PC-9 (cell line): ENCODE measurements at regions of chrX and their contacts with region 1.

Region 1: DNA sequence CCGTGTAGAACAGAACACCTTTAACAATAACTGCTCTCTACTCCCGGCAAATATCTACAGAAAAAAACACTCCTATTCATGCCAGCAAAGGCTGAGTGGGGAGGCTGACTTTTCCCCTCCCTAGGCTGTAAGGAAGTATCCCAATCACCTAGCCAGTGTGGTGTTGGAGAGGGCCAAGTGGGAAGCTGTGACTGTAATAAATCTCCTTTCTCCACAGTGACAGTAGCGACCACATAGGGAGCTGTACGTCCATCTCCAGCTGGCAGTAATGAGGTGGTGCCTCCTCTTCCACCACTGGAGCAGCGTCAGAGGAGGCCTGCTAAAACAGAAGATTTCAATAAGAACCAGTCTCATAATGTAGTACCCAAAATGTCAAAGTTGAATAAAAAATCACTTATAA is 47.9 kb upstream of the PLAC1 start:
- DNase-seq: no peak
- H3K4me3 ChIP-seq: no peak overlapping the region
- H3K27ac ChIP-seq: no peak overlapping the region
- H3K4me1 ChIP-seq: no peaks in the 10 kb centered on the region
- H3K27me3 ChIP-seq: no peaks in the 10 kb centered on the region
- CTCF ChIP-seq: no peak

Region 2: GRCh38 chrX:134551376-134552048 is 154.6 kb before region 1 on chrX:
- CTCF ChIA-PET with region 1: no interaction called
- POLR2A ChIA-PET with region 1: no interaction called
- intact Hi-C with region 1: no loop called
- DNase-seq: peak in 1 of 2 experiments; percentile 78
- H3K4me3 ChIP-seq: peak overlapping the region; percentile 79; the same call in 1 of the 2 replicates
- H3K27ac ChIP-seq: no peak overlapping the region
- H3K4me1 ChIP-seq: peaks cover 30% of the 10 kb centered on the region
- H3K27me3 ChIP-seq: no peaks in the 10 kb centered on the region
- CTCF ChIP-seq: no peak

Region 3: GRCh38 chrX:134676440-134677092 is 29.6 kb before region 1 on chrX:
- CTCF ChIA-PET with region 1: no interaction called
- POLR2A ChIA-PET with region 1: interaction called, 19 read pairs
- intact Hi-C with region 1: no loop called
- DNase-seq: peak; percentile 56 to 73
- H3K4me3 ChIP-seq: no peak overlapping the region
- H3K27ac ChIP-seq: no peak overlapping the region
- H3K4me1 ChIP-seq: peaks cover 17% of the 10 kb centered on the region
- H3K27me3 ChIP-seq: no peaks in the 10 kb centered on the region
- CTCF ChIP-seq: no peak

Region 4: GRCh38 chrX:134807039-134807731 is 101.0 kb after region 1 on chrX:
- CTCF ChIA-PET with region 1: no interaction called
- POLR2A ChIA-PET with region 1: no interaction called
- intact Hi-C with region 1: no loop called
- DNase-seq: peak; percentile 86 to 89
- H3K4me3 ChIP-seq: peak overlapping the region; percentile 92
- H3K27ac ChIP-seq: peak overlapping the region; percentile 35
- H3K4me1 ChIP-seq: no peaks in the 10 kb centered on the region
- H3K27me3 ChIP-seq: no peaks in the 10 kb centered on the region
- CTCF ChIP-seq: no peak

Region 5: GRCh38 chrX:134908356-134908755 is 202.2 kb after region 1 on chrX:
- CTCF ChIA-PET with region 1: no interaction called
- POLR2A ChIA-PET with region 1: no interaction called
- intact Hi-C with region 1: no loop called
- DNase-seq: no peak
- H3K4me3 ChIP-seq: no peak overlapping the region
- H3K27ac ChIP-seq: no peak overlapping the region
- H3K4me1 ChIP-seq: peaks cover 2% of the 10 kb centered on the region; the same call in 1 of the 2 replicates
- H3K27me3 ChIP-seq: no peaks in the 10 kb centered on the region
- CTCF ChIP-seq: peak; percentile 53